ENCODE measurements at regions of chr7 and their contacts with region 1.

Region 1: GRCh38 chr7:1137510-1138167 is 22.4 kb downstream of the ZFAND2A start:
- DNase-seq: no peak
- H3K4me3 Mint-ChIP-seq: peak overlapping the region; percentile 87
- H3K27ac Mint-ChIP-seq: peak overlapping the region; percentile 87
- H3K4me1 Mint-ChIP-seq: peaks cover 9% of the 10 kb centered on the region
- H3K27me3 Mint-ChIP-seq: no peaks in the 10 kb centered on the region

Region 2: DNA sequence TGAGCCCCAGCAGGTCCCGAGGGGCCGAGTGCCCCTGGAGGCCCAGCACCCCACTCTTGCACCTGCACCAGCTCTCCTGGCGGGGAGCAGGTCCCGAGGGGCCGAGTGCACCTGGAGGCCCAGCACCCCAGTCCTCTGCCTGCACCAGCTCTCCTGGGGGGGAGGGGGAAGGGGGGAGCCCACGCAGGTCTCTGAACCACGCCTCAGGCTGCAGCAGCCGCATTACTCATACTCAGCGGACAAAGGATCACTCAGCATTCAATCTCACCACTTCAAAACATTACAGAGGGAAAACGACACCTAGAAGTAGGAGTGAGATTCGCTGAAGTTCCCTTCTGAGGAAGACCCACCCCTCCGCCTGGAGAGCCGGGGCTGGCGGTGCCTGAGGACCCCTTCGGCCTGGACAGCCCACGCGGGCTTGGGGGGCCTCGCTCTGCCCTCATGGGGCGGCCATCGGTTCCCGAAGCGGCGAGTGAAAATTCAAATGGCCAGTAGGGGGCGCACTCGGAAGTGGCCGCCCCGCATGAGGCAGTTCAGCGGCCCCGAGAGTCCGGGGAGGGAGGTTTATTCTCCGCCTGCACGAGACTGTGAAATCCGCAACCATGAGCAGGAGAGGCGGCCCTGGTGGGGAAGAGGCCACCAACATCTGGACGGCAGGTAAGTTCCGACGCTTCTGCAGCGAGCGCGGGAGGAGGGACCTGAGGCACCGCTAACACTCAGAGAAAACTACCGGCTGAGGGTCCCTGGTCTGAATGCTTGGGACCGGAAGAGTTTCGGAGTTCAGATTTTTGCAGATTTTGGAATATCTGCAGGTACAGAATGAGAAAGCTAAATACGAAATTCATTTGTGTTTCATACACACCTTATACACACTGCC is 50.8 kb before region 1 on chr7:
- intact Hi-C with region 1: loop called (anchors 5 kb)
- DNase-seq: peak; percentile 68
- H3K4me3 Mint-ChIP-seq: peak overlapping the region; percentile 62
- H3K27ac Mint-ChIP-seq: no peak overlapping the region
- H3K4me1 Mint-ChIP-seq: peaks cover 3% of the 10 kb centered on the region
- H3K27me3 Mint-ChIP-seq: no peaks in the 10 kb centered on the region

Region 3: DNA sequence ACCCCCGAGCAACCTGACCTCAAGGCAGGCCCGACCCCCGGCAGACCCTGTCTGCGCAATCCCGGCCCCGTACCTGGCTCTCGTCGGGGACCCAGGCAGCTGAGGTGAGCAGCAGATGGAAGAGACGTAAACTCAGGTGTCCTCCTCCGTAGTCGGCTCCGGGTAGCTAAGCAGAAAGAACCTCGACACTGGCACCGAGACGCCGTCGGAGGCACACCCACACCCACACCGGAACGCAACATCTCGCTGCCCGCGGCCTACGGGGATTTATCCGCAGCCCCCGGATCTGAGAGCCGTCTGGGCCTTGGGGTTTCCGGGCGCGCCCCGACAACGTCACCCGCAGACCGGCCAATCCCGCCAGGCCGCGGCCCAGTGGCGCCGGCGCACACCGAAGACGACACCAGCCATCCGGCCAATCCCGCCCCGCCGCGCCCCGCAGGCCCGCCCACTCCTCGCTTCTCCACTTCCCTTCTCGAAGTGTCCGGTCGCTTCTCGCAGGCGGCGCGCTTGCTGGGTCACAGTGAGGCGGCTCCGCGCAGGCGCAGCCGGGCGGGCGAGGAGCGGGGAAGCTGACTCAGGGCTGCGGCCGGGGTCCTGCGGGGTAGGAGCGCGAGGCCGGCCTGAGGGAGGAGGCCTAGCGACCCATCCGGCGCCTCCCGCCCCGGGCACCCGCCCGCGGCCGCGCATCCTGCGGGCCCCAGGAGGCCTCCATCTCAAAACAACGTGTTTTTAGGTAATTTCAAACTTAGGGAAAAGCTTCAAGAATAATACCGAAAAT is 22.4 kb after region 1 on chr7 and contains the start of gene ZFAND2A:
- intact Hi-C with region 1: loop called (anchors 1 kb)
- DNase-seq: peak; percentile 99
- H3K4me3 Mint-ChIP-seq: peak within 1 kb of the TSS; percentile 91
- H3K27ac Mint-ChIP-seq: peak within 1 kb of the TSS; percentile 78
- H3K4me1 Mint-ChIP-seq: peaks cover 16% of the 10 kb centered on the region
- H3K27me3 Mint-ChIP-seq: no peaks in the 10 kb centered on the region
- total RNA-seq, gene ZFAND2A: 20.5 and 21.9 TPM in 2 replicates

Region 4: GRCh38 chr7:1169409-1170368 is 32.0 kb after region 1 on chr7:
- intact Hi-C with region 1: loop called (anchors 2 kb)
- DNase-seq: peak; percentile 86
- H3K4me3 Mint-ChIP-seq: peak overlapping the region; percentile 80
- H3K27ac Mint-ChIP-seq: peak overlapping the region; percentile 84
- H3K4me1 Mint-ChIP-seq: peaks cover 9% of the 10 kb centered on the region
- H3K27me3 Mint-ChIP-seq: no peaks in the 10 kb centered on the region

Measured in activated T-helper 2 cell treated with anti-CD3 and anti-CD28 coated beads, Interferon-gamma antibody, Interleukin-2, Interleukin-4, amounts not matched to agents 10 μg/mL and 5 μg/mL and 100 μg/mL, durations not matched to agents 14 hours and 24 hours and 36 hours (primary cell).